Endothelial cell of umbilical vein (primary cell): ENCODE measurements at regions of chr10 and their contacts with region 1.

Region 1: DNA sequence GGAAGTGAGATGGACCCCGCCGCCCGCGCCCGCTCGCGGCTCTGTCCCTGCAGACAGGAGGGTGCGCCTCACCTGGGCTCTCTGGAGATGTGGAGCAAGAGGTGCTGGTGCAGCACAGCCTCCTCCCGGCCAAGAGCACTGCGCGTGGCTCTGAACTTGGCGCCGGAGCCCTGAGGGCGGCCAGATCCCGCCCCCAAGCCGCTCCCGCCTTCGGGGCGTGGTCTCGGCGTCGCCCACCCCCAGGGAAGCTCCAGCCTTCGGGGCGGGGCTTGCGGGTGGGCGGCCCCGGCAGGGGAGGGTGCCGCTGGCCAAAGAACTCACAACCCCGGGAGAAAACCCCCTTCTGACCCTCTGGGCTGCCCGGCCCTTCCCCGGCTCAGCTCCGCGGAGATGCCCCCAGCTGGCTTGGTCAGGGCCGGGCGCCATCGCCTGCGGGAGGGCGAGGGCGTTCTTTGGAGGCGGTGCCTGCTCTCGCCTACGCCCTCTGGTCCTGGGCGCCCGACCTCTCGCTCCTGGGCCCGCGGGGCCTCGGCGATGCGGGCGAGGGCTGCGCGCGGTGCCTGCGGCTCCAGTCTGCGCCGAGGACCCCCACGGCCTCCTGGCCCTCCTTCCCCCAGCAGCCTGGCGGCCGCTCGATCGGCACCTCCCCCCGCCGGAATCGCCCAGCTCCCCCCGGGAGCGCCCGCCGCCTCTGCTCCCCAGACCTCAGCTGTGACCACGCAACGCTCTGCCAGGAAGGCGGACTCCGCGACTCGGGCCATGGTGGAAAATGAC is at the start of gene ZNF488:
- DNase-seq: peak; percentile 83
- H3K4me3 ChIP-seq: peak within 1 kb of the TSS; percentile 10 to 58 (median 54)
- H3K27ac ChIP-seq: no peak within 1 kb of the TSS
- H3K4me1 ChIP-seq: peaks cover 3% of the 10 kb centered on the region
- H3K27me3 ChIP-seq: peaks cover 13 to 26% of the 10 kb centered on the region in 2 experiments
- CTCF ChIP-seq: no peak
- POLR2A ChIP-seq: no peak
- total RNA-seq, gene ZNF488: 0.28 and 0.38 TPM in 2 replicates

Region 2: DNA sequence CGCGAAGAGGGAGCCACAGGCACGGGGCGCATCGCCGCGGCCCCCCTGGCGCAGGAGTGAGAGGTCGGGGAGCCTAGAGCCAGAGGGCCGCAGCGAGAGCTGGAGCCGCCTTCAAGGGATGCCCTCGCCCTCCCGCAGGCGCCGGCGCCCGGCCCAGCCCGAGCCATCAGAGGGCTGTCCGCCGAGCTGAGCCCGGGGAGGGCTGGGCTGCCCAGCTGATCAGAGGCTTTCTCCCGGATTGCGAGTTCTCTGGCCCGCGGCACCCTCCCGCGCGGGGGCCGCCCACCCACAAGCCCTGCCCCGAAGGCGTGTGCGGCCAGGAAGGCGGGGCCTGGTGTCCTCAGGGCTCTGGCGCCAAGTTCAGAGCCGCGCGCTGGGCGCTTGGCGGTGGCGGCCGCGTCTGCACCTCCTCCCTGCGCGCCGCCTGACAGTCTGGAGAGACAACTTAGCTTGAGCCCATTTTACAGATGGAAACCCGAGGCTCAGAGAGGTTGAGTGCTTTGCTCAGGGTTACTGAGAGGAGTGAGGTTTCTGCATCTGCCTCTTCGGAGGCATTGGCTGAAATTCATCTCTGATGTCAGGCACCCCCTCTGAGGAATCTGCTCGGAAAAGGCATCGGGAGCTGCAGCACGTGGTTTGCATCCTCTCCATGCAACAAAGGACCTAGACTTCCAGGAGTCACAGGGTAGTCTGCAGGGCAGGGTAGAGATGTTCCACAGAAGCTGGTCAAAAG is 1101.3 kb before region 1 on chr10:
- CTCF ChIA-PET with region 1: interaction called, 10 read pairs
- POLR2A ChIA-PET with region 1: no interaction called
- dilution Hi-C with region 1: no loop called
- intact Hi-C with region 1: no loop called
- DNase-seq: peak; percentile 36
- H3K4me3 ChIP-seq: peak overlapping the region in 1 of 3 experiments; percentile 39
- H3K27ac ChIP-seq: no peak overlapping the region
- H3K4me1 ChIP-seq: peaks cover 4% of the 10 kb centered on the region
- H3K27me3 ChIP-seq: peaks cover 9% of the 10 kb centered on the region in 2 experiments
- CTCF ChIP-seq: no peak
- POLR2A ChIP-seq: no peak

Region 3: GRCh38 chr10:47361293-47361692 is 23.0 kb before region 1 on chr10:
- CTCF ChIA-PET with region 1: interaction called, 13 read pairs
- POLR2A ChIA-PET with region 1: no interaction called
- dilution Hi-C with region 1: no loop called
- intact Hi-C with region 1: no loop called
- DNase-seq: peak; percentile 45
- H3K4me3 ChIP-seq: no peak overlapping the region
- H3K27ac ChIP-seq: no peak overlapping the region
- H3K4me1 ChIP-seq: no peaks in the 10 kb centered on the region
- H3K27me3 ChIP-seq: no peaks in the 10 kb centered on the region
- CTCF ChIP-seq: peak; percentile 86
- POLR2A ChIP-seq: no peak

Region 4: DNA sequence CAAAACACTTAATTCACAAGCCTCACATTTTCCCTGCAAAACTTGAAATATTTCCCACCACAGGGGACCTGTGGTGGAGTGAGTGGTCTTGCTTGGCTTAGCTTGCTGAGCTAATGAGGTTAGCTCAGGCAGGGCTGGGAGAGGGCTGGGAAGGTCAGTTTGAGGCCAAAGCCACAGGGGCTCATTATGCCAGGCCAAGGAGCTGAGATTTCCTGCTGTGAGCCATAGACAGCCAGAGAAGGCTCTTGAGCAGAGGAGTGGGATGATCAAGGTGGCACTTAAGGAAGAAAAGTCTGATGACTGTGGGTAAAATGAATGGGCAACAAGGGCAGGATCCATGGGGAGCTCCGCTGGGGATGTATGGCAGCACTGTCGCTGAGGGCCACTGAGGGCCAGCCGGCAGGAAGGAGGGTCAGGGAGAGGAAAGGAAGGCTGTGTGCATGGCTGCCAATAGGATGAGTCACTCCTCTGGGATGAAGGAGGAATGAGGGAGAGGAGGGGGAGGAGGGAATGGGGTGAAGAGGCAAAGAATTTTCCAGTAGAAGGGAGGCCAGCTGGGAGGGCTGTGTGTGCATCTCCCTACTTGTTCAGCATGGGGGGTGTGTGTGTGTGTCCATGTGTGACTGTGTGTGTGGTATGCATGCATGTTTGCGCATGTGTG is 18.4 kb after region 1 on chr10:
- CTCF ChIA-PET with region 1: interaction called, 3 read pairs
- POLR2A ChIA-PET with region 1: no interaction called
- dilution Hi-C with region 1: no loop called
- intact Hi-C with region 1: loop called (anchors 1 kb)
- DNase-seq: peak; percentile 87
- H3K4me3 ChIP-seq: no peak overlapping the region
- H3K27ac ChIP-seq: peak overlapping the region; percentile 45
- H3K4me1 ChIP-seq: peaks cover 18% of the 10 kb centered on the region
- H3K27me3 ChIP-seq: peaks cover 0 to 2% of the 10 kb centered on the region in 2 experiments
- CTCF ChIP-seq: no peak
- POLR2A ChIP-seq: peak; percentile 26

Region 5: GRCh38 chr10:47412869-47413268 is 28.5 kb after region 1 on chr10:
- CTCF ChIA-PET with region 1: no interaction called
- POLR2A ChIA-PET with region 1: no interaction called
- dilution Hi-C with region 1: no loop called
- intact Hi-C with region 1: loop called (anchors 1 kb)
- DNase-seq: peak; percentile 73
- H3K4me3 ChIP-seq: no peak overlapping the region
- H3K27ac ChIP-seq: no peak overlapping the region
- H3K4me1 ChIP-seq: peaks cover 15% of the 10 kb centered on the region
- H3K27me3 ChIP-seq: no peaks in the 10 kb centered on the region
- CTCF ChIP-seq: no peak
- POLR2A ChIP-seq: no peak